Psoas muscle (tissue), 8 donors: ENCODE measurements at regions of chr10 and their contacts with region 1.

Region 1: GRCh38 chr10:89793649-89794254 is 92.4 kb downstream of the KIF20B start:
- DNase-seq: no peak
- ATAC-seq: peak in 2 of 4 donors; percentile 55 to 78
- H3K4me3 ChIP-seq: no peak overlapping the region
- H3K27ac ChIP-seq: no peak overlapping the region
- H3K4me1 ChIP-seq: no peaks in the 10 kb centered on the region
- H3K27me3 ChIP-seq: no peaks in the 10 kb centered on the region
- CTCF ChIP-seq: peak; percentile 77

Region 2: DNA sequence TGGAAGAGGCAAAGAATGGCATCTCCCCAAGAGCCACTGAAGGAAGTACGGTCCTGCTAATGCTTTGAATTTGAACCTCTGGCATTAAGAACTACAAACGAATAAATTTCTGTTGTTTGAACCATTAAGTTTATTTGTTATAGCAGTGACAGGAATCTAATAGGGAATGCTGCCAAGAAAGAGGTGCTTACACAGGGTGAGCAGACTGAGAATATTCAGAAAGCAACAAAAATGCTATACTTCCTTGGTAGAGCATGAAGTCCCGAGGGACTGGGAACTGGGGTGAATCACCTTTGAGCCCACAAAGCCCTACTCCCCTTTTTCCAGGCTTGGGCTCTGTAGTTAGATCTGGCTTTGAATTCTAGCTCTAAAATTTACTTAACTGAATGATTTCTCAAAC is 193.7 kb before region 1 on chr10:
- intact Hi-C with region 1: no loop called
- DNase-seq: no peak
- ATAC-seq: no peak
- H3K4me3 ChIP-seq: no peak overlapping the region
- H3K27ac ChIP-seq: no peak overlapping the region
- H3K4me1 ChIP-seq: no peaks in the 10 kb centered on the region
- H3K27me3 ChIP-seq: no peaks in the 10 kb centered on the region
- CTCF ChIP-seq: no peak

Region 3: DNA sequence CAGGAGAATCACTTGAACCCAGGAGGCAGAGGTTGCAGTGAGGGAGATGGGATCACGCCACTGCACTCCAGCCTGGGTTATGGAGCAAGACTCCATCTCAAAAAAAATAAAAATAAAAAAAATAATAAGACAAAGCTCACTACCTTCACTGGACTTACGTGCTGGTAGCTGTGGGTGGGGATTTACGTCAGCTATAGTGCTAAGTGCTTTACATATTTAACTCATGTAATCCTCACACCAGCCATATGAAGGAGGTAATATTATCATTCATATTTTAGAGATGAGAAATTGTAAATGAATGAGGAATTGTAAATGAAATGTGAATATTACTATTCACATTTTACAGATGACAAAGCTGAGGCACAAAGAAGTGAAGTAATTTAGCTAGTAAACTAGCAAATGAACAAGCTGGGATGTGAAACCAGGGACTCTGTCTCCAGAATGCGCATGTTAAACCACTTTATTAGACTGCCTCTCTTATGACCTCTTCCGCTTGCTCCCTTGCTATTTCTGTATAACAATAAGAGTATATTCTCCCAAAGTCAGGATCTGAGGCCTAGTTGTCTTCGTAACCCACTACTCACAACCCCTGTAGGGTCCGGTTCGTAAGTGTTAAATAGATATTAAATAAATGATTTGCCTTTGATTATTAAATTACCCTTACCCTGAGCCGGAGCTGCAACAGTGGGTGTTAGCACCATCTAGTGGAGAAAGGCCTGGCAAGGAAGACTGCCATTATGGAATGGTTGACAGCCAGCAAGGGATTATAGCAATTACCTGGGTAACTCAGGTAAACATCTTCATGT is 993.8 kb after region 1 on chr10:
- intact Hi-C with region 1: loop called (anchors 5 to 10 kb)
- DNase-seq: no peak
- ATAC-seq: no peak
- H3K4me3 ChIP-seq: no peak overlapping the region
- H3K27ac ChIP-seq: no peak overlapping the region
- H3K4me1 ChIP-seq: no peaks in the 10 kb centered on the region
- H3K27me3 ChIP-seq: no peaks in the 10 kb centered on the region
- CTCF ChIP-seq: peak; percentile 63